ENCODE measurements at regions of chrX and their contacts with region 1.

Region 1: DNA sequence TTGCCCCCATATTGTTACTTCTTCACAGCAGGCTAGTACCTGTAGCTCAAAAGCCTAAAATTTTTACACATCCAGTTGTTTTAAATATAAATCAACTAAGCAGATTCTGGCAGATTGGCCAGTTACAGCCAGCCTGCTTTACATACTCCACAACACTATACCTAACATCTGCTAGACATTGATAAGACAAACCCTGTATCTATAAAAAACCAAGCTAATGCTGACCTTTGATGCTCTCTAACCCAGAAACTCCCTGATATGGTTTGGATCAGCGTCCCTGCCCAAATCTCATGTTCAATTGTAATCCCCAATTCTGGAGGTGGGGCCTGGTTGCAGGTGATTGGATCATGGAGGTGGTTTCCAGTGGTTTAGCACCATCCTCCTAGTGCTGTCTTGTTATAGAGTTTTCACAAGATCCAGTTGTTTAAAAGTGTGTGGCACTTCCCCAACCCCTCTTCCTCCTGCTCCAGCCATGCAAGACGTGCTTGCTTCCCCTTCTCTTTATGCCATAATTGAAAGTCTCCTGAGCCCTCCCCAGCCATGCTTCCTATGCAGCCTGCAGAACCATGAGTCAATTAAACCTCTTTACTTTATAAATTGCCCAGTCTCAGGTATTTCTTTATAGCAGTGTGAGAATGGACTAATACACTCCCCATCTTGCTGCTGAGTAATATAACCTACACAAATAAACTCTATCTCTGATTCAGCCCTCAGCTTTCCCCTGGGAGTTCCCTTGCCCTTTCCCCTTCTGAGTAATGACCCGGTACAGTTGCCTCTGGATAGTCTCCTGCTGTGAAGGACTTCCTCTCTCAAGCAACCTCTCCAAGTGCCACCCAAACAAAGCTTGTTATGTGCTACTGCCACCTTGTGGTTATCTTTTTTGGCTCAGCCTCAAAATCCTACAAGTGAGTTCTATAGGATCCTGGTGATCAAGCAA is 39.6 kb downstream of the ZCCHC13 start:
- DNase-seq: peak; percentile 27 to 53
- H3K4me3 ChIP-seq: no peak overlapping the region
- H3K27ac ChIP-seq: no peak overlapping the region
- H3K4me1 ChIP-seq: peaks cover 0 to 3% (median under 1%) of the 10 kb centered on the region in 4 experiments; a peak in 1 of 7 replicates
- H3K27me3 ChIP-seq: no peaks in the 10 kb centered on the region
- CTCF ChIP-seq: peak in 2 of 3 experiments; percentile 61 to 64; a peak in 3 of 4 replicates
- EP300 ChIP-seq: no peak
- POLR2A ChIP-seq: no peak
- RAD21 ChIP-seq: peak; percentile 81 to 90

Region 2: GRCh38 chrX:74133156-74133796 is 210.3 kb before region 1 on chrX:
- CTCF ChIA-PET with region 1: interaction called, 12 read pairs
- POLR2A ChIA-PET with region 1: no interaction called
- DNase-seq: no peak
- H3K4me3 ChIP-seq: no peak overlapping the region
- H3K27ac ChIP-seq: no peak overlapping the region
- H3K4me1 ChIP-seq: peaks cover 0 to 2% (median 0%) of the 10 kb centered on the region in 4 experiments; a peak in 2 of 7 replicates
- H3K27me3 ChIP-seq: no peaks in the 10 kb centered on the region
- CTCF ChIP-seq: peak in 2 of 3 experiments; percentile 26 to 61; a peak in 2 of 4 replicates
- EP300 ChIP-seq: no peak
- POLR2A ChIP-seq: no peak
- RAD21 ChIP-seq: peak; percentile 81 to 84

Region 3: DNA sequence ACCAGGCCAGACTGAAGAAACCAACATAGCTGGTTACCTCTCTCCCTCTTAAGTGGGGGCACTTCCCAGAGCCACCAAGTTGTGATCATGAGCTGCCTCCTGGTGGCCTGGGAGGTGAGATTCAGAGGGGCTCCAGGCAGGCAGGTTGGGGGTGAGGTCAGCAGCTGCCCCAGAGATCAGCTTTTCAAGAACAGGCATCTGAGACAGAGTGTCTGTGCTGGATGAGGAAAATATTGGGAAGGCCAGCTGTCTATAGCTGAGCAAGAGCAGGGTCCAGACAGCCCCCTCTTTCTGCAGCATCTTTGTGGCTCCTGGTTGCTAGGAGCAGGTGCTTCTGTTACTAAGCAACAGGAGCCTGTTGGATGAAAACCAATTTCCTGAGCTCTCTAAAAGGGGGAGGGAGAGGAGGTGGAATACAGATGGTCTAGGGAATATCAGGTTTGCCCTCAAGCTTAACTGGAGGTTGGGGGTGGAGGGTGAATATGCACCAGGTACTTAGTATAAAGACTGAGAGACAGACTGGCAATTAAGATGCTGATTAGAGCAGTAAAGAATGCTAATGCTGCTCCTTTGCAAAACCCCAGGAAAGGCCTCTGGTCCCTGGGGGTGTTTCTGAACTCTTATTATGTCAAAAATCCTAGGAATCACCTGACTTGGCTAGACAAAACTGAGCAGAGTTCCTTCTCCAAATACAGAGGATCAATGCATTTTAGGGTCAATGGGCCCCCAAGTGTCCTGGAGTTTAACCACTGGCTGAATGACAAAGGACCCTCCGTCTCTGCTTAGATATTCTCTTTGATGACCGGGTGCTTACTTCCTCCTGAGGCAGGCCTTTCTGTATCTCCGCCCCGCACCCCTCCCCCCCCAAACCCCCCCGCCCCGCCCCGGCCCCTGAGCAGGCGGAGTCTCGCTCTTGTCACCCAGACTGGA is 18.2 kb before region 1 on chrX:
- CTCF ChIA-PET with region 1: interaction called, 11 read pairs
- POLR2A ChIA-PET with region 1: interaction called, 8 read pairs
- DNase-seq: peak; percentile 57 to 71
- H3K4me3 ChIP-seq: 0 out of 8 replicates have a peak overlapping the region, but pooled peaks of 1 of the 4 experiments have one; percentile 26
- H3K27ac ChIP-seq: no peak overlapping the region; the same call in 1 of the 2 replicates
- H3K4me1 ChIP-seq: peaks cover 0 to 12% (median 8%) of the 10 kb centered on the region in 4 experiments; a peak in 4 of 7 replicates
- H3K27me3 ChIP-seq: no peaks in the 10 kb centered on the region
- CTCF ChIP-seq: peak; percentile 40 to 58 (median 57)
- EP300 ChIP-seq: no peak
- POLR2A ChIP-seq: no peak
- RAD21 ChIP-seq: peak; percentile 73 to 82

Region 4: DNA sequence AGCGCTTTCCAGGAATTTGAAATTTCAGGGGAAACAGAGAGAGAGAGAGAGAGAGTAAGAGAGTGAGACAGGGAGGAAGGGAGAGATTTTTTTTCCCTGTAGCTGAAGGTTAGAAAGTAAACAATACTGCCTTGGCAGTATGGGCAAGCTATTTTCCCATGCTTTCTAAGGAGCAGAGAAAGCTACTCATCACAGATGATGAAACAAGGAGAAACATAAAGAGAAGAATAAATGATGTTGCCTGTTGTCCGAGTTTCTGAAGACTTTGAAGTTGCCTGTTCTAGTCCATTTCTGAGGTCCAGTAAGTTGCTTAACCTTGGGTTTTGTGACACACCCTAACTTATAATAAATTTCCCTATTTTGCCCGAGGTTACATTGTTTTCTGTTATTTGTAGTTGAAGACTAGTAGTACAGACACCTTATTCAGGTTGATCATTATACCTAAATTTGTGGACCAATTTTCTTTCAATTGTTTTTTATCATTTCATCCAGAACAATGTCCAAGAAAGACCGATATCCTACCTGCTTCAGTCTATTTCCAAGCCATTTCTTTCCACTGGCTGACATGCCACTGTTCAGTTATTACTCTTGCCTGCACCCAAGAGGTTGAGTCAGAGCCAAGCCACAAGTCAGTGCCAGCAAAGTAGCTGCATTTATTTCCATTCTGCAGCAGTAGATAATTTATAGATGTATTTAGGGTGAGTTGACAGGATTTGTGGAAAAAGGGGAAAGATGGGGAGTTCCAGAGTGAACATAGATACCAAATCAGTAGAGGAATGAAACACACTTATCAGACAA is 28.0 kb after region 1 on chrX:
- CTCF ChIA-PET with region 1: no interaction called
- POLR2A ChIA-PET with region 1: no interaction called
- DNase-seq: no peak
- H3K4me3 ChIP-seq: no peak overlapping the region
- H3K27ac ChIP-seq: no peak overlapping the region
- H3K4me1 ChIP-seq: no peaks in the 10 kb centered on the region
- H3K27me3 ChIP-seq: no peaks in the 10 kb centered on the region
- CTCF ChIP-seq: no peak
- EP300 ChIP-seq: no peak
- POLR2A ChIP-seq: no peak
- RAD21 ChIP-seq: no peak